Activated B cell treated with CpG ODN at 0.5 μM for 24 hours (primary cell): ENCODE measurements at regions of chr11 and their contacts with region 1.

Region 1: GRCh38 chr11:35030716-35031213 is 108.2 kb upstream of the CD44 start:
- DNase-seq: no peak
- ATAC-seq: peak; percentile 58
- H3K4me3 Mint-ChIP-seq: peak overlapping the region; percentile 79
- H3K27ac Mint-ChIP-seq: peak overlapping the region; percentile 96
- H3K4me1 Mint-ChIP-seq: peaks cover 75% of the 10 kb centered on the region
- H3K27me3 Mint-ChIP-seq: no peaks in the 10 kb centered on the region
- CTCF ChIP-seq: no peak

Region 2: DNA sequence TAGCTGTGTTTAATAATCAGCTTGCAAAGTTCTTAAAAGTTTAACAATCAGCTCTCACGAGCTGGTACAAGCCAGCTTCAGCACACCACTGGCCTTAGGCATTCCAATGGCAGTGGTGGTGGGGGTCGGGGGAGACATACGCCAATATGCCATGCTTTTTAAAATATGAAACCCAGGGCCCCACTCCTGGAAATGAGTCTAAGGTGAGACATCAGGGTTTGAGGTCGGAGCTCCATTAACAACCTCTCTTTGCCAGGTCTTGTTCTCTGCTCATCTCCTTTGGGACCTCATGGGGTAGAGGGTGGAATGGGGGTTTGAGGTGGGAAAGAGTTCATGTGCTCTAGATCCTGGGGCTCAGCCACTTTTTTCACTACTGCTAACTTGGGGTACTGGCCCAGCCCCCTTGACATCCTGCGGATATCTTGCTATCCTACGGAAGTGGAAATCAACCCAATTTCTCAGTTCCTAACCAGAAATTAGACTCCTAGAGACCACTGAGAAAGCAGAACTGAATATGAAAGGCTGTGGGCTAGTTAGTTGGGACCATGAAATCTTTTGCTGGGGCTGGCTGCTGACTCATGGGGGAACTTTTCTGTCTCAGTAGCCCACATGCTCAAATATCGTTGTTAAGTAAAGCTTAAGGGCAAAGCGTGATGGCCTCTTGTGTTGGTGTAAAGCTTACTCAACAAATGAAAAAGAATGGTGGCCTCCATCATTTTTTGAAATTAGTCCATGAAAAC is 24.2 kb before region 1 on chr11:
- CTCF ChIA-PET with region 1: interaction called, 4 read pairs
- POLR2A ChIA-PET with region 1: interaction called, 26 read pairs
- intact Hi-C with region 1: loop called (anchors 1 kb)
- DNase-seq: peak; percentile 27
- ATAC-seq: peak; percentile 92
- H3K4me3 Mint-ChIP-seq: peak overlapping the region; percentile 28
- H3K27ac Mint-ChIP-seq: peak overlapping the region; percentile 84
- H3K4me1 Mint-ChIP-seq: peaks cover 58% of the 10 kb centered on the region
- H3K27me3 Mint-ChIP-seq: no peaks in the 10 kb centered on the region
- CTCF ChIP-seq: no peak

Region 3: GRCh38 chr11:35013514-35014233 is 17.1 kb before region 1 on chr11:
- CTCF ChIA-PET with region 1: no interaction called
- POLR2A ChIA-PET with region 1: interaction called, 50 read pairs
- intact Hi-C with region 1: loop called (anchors 1 kb)
- DNase-seq: no peak
- ATAC-seq: peak; percentile 47
- H3K4me3 Mint-ChIP-seq: peak overlapping the region; percentile 59
- H3K27ac Mint-ChIP-seq: peak overlapping the region; percentile 90
- H3K4me1 Mint-ChIP-seq: peaks cover 43% of the 10 kb centered on the region
- H3K27me3 Mint-ChIP-seq: no peaks in the 10 kb centered on the region
- CTCF ChIP-seq: no peak

Region 4: DNA sequence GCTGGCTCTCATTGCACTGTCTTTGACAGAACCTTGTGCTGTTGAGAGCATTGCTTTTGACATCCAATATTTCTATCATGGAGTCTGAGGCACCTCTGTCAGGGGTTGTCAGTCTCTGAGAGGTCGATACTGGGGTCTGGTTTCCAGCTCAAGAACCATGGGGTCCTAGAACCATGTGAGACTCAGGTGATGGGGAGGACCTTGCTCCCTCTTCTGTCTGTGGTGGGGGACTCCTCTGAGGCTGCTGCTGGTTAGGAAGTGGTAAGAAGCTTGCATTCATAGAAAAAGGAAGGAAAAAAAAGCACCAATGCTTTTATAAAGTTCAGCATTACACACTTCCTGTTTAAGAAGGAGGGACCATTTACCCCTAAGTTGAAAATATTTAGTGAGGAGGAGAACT is 16.4 kb after region 1 on chr11:
- CTCF ChIA-PET with region 1: interaction called, 5 read pairs
- POLR2A ChIA-PET with region 1: interaction called, 37 read pairs
- intact Hi-C with region 1: loop called (anchors 1 kb)
- DNase-seq: no peak
- ATAC-seq: peak; percentile 53
- H3K4me3 Mint-ChIP-seq: peak overlapping the region; percentile 50
- H3K27ac Mint-ChIP-seq: peak overlapping the region; percentile 93
- H3K4me1 Mint-ChIP-seq: peaks cover 80% of the 10 kb centered on the region
- H3K27me3 Mint-ChIP-seq: no peaks in the 10 kb centered on the region
- CTCF ChIP-seq: no peak

Region 5: GRCh38 chr11:35116762-35117640 is 86.2 kb after region 1 on chr11:
- CTCF ChIA-PET with region 1: no interaction called
- POLR2A ChIA-PET with region 1: interaction called, 15 read pairs
- intact Hi-C with region 1: no loop called
- DNase-seq: no peak
- ATAC-seq: no peak
- H3K4me3 Mint-ChIP-seq: no peak overlapping the region
- H3K27ac Mint-ChIP-seq: peak overlapping the region; percentile 66
- H3K4me1 Mint-ChIP-seq: peaks cover 85% of the 10 kb centered on the region
- H3K27me3 Mint-ChIP-seq: no peaks in the 10 kb centered on the region
- CTCF ChIP-seq: no peak